Aorta (tissue), 5 donors: ENCODE measurements at regions of chr17 and their contacts with region 1.

Region 1: DNA sequence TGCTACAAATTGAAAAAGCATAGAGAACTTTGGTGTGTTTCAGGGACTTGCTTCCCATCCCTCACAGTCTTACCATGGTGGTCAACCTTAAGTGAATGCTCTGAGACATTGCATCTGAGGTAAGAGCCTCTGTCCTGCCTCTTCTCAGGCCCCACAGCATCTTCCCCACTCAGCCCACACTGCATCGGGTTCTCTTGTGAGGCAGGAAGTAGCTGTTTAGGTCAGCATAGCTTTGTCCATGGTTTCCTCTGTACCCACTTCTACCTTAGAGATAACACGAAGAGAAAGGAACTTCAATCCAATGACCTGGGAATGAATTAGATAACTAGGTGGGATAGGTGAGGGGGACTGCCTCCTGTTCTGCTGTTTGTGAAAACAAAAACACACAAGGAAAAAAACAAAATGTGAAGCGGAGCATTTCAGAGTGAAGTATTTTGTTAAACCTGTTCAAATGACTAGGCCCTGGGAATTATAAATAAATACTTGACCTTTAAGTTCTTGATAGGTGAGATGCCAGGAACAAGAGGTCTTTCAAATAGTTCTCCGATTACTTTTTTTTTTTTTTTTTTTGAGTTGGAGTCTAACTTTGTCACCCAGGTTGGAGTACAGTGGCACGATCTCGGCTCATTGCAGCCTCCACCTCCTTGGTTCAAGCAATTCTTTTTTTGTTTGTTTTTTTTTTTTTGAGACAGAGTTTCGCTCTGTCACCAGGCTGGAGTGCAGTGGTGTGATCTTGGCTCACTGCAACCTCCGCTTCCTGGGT is 17.7 kb downstream of the SOCS7 start:
- DNase-seq: no peak
- ATAC-seq: no peak
- H3K4me3 ChIP-seq: no peak overlapping the region
- H3K27ac ChIP-seq: no peak overlapping the region
- H3K4me1 ChIP-seq: no peaks in the 10 kb centered on the region
- H3K27me3 ChIP-seq: no peaks in the 10 kb centered on the region

Region 2: GRCh38 chr17:38332735-38333134 is 36.6 kb before region 1 on chr17:
- intact Hi-C with region 1: loop called in 1 of 2 experiments (anchors 1 kb)
- DNase-seq: no peak
- ATAC-seq: no peak
- H3K4me3 ChIP-seq: no peak overlapping the region
- H3K27ac ChIP-seq: no peak overlapping the region
- H3K4me1 ChIP-seq: no peaks in the 10 kb centered on the region
- H3K27me3 ChIP-seq: no peaks in the 10 kb centered on the region